ENCODE measurements at regions of chr11 and their contacts with region 1.

Region 1: DNA sequence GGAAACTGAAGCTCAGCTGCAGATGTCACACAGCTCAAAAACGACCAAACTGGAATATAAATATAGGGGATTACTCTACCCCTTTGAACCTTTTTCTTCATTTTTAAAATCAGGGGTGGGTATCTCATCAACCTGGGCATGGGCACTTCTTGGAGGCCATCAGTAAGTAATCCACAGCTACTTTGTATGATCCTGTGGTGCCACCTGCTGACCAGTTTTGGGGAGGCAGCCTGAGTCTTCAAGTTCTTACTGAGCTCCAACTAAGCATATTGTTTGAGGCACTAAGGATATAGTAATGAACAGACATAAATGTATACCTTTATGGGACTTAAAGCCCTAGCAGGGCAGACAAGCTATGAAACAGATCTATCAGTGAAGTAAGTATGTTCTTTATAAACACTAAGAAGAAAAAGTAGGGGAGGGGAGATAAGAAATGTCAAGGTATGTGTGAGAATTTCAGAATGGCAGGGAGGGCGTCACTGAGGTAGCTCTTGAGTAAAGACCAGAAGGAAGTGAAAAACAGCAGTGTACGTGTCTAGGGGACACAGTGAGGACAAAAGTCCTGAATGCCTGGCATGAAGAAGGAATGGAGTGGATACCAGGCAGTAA is 18.4 kb downstream of the TUB start:
- DNase-seq: no peak
- ATAC-seq: peak; percentile 90
- H3K4me3 ChIP-seq: no peak overlapping the region
- H3K27ac ChIP-seq: no peak overlapping the region
- H3K4me1 ChIP-seq: no peaks in the 10 kb centered on the region
- H3K27me3 ChIP-seq: no peaks in the 10 kb centered on the region
- CTCF ChIP-seq: peak; percentile 70 to 81 (median 72)
- EP300 ChIP-seq: no peak
- POLR2A ChIP-seq: no peak
- RAD21 ChIP-seq: peak; percentile 85

Region 2: GRCh38 chr11:7759010-7759409 is 340.4 kb before region 1 on chr11:
- CTCF ChIA-PET with region 1: no interaction called
- POLR2A ChIA-PET with region 1: no interaction called
- RAD21 ChIA-PET with region 1: no interaction called
- SMC1A ChIA-PET with region 1: no interaction called
- in situ Hi-C with region 1: no loop called
- intact Hi-C with region 1: no loop called
- DNase-seq: peak; percentile 30
- ATAC-seq: peak; percentile 50
- H3K4me3 ChIP-seq: no peak overlapping the region
- H3K27ac ChIP-seq: no peak overlapping the region
- H3K4me1 ChIP-seq: no peaks in the 10 kb centered on the region
- H3K27me3 ChIP-seq: no peaks in the 10 kb centered on the region
- CTCF ChIP-seq: no peak
- EP300 ChIP-seq: no peak
- POLR2A ChIP-seq: no peak
- RAD21 ChIP-seq: no peak

Region 3: GRCh38 chr11:7892840-7893254 is 206.5 kb before region 1 on chr11:
- CTCF ChIA-PET with region 1: interaction called, 12 read pairs
- POLR2A ChIA-PET with region 1: no interaction called
- RAD21 ChIA-PET with region 1: interaction called, 3 read pairs
- SMC1A ChIA-PET with region 1: interaction called, 7 read pairs
- in situ Hi-C with region 1: no loop called
- intact Hi-C with region 1: loop called (anchors 10 kb)
- DNase-seq: no peak
- ATAC-seq: peak; percentile 76
- H3K4me3 ChIP-seq: no peak overlapping the region
- H3K27ac ChIP-seq: no peak overlapping the region
- H3K4me1 ChIP-seq: peaks cover 14% of the 10 kb centered on the region
- H3K27me3 ChIP-seq: no peaks in the 10 kb centered on the region; a peak in 1 of 4 replicates
- CTCF ChIP-seq: peak; percentile 59 to 79 (median 77); a peak in 5 of 6 replicates
- EP300 ChIP-seq: no peak
- POLR2A ChIP-seq: no peak
- RAD21 ChIP-seq: peak; percentile 73

Region 4: GRCh38 chr11:8006349-8006977 is 92.9 kb before region 1 on chr11:
- CTCF ChIA-PET with region 1: interaction called, 94 read pairs
- POLR2A ChIA-PET with region 1: no interaction called
- RAD21 ChIA-PET with region 1: interaction called, 56 read pairs
- SMC1A ChIA-PET with region 1: interaction called, 30 read pairs
- in situ Hi-C with region 1: loop called (anchors 5 kb)
- intact Hi-C with region 1: no loop called
- DNase-seq: peak; percentile 7
- ATAC-seq: peak; percentile 95
- H3K4me3 ChIP-seq: no peak overlapping the region
- H3K27ac ChIP-seq: no peak overlapping the region
- H3K4me1 ChIP-seq: no peaks in the 10 kb centered on the region
- H3K27me3 ChIP-seq: no peaks in the 10 kb centered on the region
- CTCF ChIP-seq: peak; percentile 91 to 92 (median 91)
- EP300 ChIP-seq: no peak
- POLR2A ChIP-seq: no peak
- RAD21 ChIP-seq: peak; percentile 94

Region 5: DNA sequence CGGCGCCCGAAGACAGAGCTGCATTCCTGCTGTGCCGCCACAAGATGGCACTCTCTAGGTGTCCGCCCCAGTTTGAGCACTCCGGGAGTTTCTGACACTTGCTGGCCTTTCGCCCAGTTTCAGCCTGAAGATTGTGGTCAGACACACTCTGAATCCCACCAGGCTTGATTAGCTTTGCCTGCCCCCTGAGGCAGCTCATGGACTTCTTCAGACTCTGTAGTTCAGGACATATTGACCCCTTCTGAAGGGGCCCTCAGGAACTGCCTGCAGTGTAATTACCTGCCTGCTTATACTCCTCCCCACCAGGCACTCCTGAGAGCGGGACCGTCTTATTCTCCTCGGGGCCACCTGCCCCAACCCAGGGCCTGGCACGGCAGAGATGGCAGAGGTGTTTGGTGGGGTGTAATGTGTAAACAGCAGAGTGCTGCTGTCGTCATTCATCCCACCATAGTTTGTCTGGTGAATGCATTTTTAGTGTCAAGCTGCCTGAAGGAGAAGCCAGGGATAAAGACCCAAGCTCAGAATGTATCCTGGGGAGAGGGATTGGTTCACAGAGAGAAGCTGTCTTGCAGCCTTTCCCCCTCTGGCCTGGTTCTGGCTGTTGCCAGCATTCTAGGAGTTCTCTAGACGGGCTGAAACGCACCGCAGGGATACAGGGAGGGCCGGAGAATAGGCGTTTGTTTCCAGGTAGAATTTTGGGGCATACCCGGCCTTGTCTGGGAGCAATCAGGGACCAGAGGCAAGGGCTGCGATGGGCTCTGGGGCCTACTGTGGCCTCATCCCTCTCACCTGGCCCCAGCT is 65.9 kb before region 1 on chr11:
- CTCF ChIA-PET with region 1: interaction called, 77 read pairs
- POLR2A ChIA-PET with region 1: no interaction called
- RAD21 ChIA-PET with region 1: interaction called, 30 read pairs
- SMC1A ChIA-PET with region 1: interaction called, 21 read pairs
- in situ Hi-C with region 1: no loop called
- intact Hi-C with region 1: loop called (anchors 1 kb)
- DNase-seq: no peak
- ATAC-seq: peak; percentile 93
- H3K4me3 ChIP-seq: no peak overlapping the region
- H3K27ac ChIP-seq: no peak overlapping the region
- H3K4me1 ChIP-seq: no peaks in the 10 kb centered on the region
- H3K27me3 ChIP-seq: no peaks in the 10 kb centered on the region; a peak in 1 of 4 replicates
- CTCF ChIP-seq: peak; percentile 81 to 90 (median 85)
- EP300 ChIP-seq: no peak
- POLR2A ChIP-seq: no peak
- RAD21 ChIP-seq: peak; percentile 67

Region 6: DNA sequence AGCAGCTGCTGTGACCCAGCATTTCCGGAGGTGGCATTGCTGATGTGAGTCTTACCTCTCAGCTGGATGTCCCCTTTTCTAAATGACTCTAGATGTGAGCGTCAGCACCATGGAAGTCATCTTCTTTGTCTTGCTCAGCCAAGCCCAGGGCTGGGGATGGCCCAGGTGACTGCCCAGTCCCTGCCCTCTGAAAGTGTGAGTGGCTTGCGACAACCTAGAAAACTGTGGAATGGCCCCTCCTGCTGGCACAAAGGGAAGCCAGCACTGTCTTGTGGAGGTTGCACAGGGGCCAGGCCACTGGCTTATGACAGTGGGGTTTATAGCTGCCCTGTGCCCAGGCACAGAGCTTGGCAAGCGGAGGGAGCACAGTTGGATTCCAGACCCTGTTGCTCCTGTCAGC is 12.2 kb before region 1 on chr11:
- CTCF ChIA-PET with region 1: interaction called, 53 read pairs
- POLR2A ChIA-PET with region 1: no interaction called
- RAD21 ChIA-PET with region 1: interaction called, 5 read pairs
- SMC1A ChIA-PET with region 1: interaction called, 10 read pairs
- in situ Hi-C with region 1: no loop called
- intact Hi-C with region 1: no loop called
- DNase-seq: no peak
- ATAC-seq: peak; percentile 83
- H3K4me3 ChIP-seq: no peak overlapping the region
- H3K27ac ChIP-seq: no peak overlapping the region
- H3K4me1 ChIP-seq: no peaks in the 10 kb centered on the region
- H3K27me3 ChIP-seq: peaks cover 0 to 11% of the 10 kb centered on the region in 2 experiments; a peak in 3 of 4 replicates
- CTCF ChIP-seq: peak in 2 of 3 experiments; percentile 4 to 35; a peak in 1 of 6 replicates
- EP300 ChIP-seq: no peak
- POLR2A ChIP-seq: no peak
- RAD21 ChIP-seq: peak; percentile 20; the same call in 1 of the 2 replicates